ENCODE measurements at regions of chr5 and their contacts with region 1.

Region 1: DNA sequence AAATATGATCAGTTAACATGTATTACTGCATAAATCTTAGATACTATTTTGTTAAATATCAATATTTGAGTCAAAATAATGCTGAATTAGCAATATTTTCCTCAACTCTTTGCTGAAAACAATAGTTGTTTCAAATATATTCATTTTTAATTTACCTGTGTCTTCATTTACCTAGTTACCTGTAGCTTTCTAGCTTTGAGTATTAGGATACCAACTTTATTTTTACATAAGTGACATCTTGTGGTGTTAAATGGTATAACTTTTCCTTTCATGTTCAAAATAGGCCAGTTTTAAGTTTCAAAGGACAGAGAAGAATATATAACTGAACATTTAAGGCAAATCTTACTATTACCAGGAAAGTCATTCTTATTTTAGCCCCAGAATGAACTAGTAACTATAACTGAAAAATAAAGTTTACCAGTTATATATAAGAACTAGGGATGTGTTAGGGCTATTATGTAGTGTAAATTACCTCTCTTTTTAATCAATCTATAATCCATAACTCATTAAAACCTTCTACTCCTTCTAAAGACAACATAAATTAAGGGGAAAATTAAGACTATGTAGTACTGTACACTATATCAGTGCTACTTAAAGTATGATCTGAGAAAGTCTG is 25.3 kb downstream of the AP3B1 start:
- DNase-seq: peak in 4 of 9 donors; percentile 15 to 26 (median 19)
- ATAC-seq: peak; percentile 76
- H3K4me3 ChIP-seq: no peak overlapping the region
- H3K4me3 Mint-ChIP-seq: no peak overlapping the region
- H3K27ac ChIP-seq: no peak overlapping the region
- H3K27ac Mint-ChIP-seq: no peak overlapping the region
- H3K4me1 ChIP-seq: no peaks in the 10 kb centered on the region
- H3K4me1 Mint-ChIP-seq: peaks cover 9 to 36% (median 31%) of the 10 kb centered on the region in 7 donors
- H3K27me3 ChIP-seq: no peaks in the 10 kb centered on the region
- H3K27me3 Mint-ChIP-seq: no peaks in the 10 kb centered on the region

Region 2: DNA sequence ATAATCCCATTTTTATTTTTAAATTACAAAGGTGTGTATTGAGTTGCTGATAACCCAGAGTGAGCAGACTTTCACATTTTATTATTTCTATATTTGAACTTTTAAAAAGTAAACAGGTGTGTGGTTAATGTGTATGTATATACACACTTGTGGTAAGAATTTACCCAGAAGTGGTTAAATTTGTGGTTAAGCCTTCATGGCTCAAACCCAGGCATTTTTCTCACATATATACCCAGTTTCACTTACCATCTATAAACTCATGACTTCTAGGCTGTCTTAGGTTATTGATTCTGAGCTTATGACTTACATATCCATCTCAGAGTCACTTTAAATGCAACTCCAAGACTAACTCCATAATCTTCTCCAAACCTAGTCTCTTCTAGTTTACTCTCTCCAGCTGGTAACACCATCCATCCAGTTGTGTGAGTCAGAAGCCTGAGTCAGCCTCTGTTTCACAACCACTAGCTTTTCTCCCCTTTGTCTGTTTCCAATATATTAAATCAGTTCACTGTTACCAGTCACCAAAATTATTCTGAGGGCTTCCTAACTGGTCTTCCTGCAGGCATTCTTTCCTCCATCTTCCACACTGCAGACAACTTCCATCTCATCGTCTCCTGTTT is 1202.3 kb before region 1 on chr5:
- CTCF ChIA-PET with region 1: no interaction called
- POLR2A ChIA-PET with region 1: no interaction called
- intact Hi-C with region 1: loop called in 1 of 2 experiments (anchors 10 kb)
- DNase-seq: no peak
- ATAC-seq: peak; percentile 47
- H3K4me3 ChIP-seq: no peak overlapping the region
- H3K4me3 Mint-ChIP-seq: no peak overlapping the region
- H3K27ac ChIP-seq: no peak overlapping the region
- H3K27ac Mint-ChIP-seq: peak overlapping the region in 1 of 9 donors; percentile 7
- H3K4me1 ChIP-seq: no peaks in the 10 kb centered on the region
- H3K4me1 Mint-ChIP-seq: peaks cover 0 to 14% (median 6%) of the 10 kb centered on the region in 7 donors
- H3K27me3 ChIP-seq: no peaks in the 10 kb centered on the region
- H3K27me3 Mint-ChIP-seq: no peaks in the 10 kb centered on the region

Region 3: DNA sequence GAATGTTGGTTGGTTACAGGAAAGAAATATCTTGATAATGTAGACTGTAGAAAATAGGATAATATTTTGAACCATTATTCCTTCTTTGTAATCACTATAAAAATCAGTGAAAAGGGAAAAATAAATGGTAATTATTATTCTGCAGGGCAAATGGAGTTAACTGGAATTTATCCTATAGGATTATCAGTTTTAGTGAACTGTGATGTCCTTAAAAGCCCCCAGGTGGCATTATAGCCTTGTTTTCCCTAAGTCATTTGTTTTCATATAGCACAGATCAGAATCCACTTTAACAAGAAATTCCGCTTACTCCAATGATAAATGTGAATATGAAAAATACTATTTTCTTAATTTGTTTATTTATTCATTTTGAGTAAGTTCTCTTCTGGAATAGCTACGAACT is 750.9 kb before region 1 on chr5:
- CTCF ChIA-PET with region 1: no interaction called
- POLR2A ChIA-PET with region 1: no interaction called
- intact Hi-C with region 1: loop called in 1 of 2 experiments (anchors 1 kb)
- DNase-seq: no peak
- ATAC-seq: no peak
- H3K4me3 ChIP-seq: no peak overlapping the region
- H3K4me3 Mint-ChIP-seq: no peak overlapping the region
- H3K27ac ChIP-seq: no peak overlapping the region
- H3K27ac Mint-ChIP-seq: no peak overlapping the region
- H3K4me1 ChIP-seq: no peaks in the 10 kb centered on the region
- H3K4me1 Mint-ChIP-seq: no peaks in the 10 kb centered on the region
- H3K27me3 ChIP-seq: no peaks in the 10 kb centered on the region
- H3K27me3 Mint-ChIP-seq: peaks cover 5 to 14% (median 10%) of the 10 kb centered on the region in 5 donors

Region 4: DNA sequence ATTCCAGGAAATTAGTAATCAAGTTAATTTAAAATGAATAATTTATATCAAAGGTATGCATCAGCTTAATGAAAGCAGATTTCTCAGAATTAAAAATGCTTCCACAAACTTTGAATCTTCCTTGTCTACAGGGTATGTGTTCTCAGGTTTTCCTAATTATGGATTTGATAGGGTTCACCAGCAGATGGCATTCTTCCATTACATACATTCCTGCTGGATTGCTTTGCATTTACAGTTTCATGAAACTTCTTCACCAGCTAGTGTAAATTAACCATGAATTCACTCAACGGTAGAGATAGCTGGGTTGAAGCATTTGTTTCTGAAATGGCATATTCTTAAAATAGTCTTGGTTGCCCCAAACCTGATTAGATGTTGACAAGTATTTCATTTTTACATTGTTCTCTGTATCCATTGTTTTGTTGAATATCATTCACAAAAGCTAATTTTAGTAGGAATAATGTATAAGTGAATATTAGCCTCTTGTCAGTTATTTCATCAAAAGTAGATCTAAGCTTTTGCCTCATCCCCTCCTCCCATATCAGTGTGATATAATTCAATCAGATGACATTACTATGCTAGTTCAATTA is 708.4 kb before region 1 on chr5:
- CTCF ChIA-PET with region 1: interaction called, 4 read pairs
- POLR2A ChIA-PET with region 1: no interaction called
- intact Hi-C with region 1: loop called in 1 of 2 experiments (anchors 2 kb)
- DNase-seq: peak in 4 of 9 donors; percentile 1 to 13 (median 6)
- ATAC-seq: no peak
- H3K4me3 ChIP-seq: no peak overlapping the region
- H3K4me3 Mint-ChIP-seq: no peak overlapping the region
- H3K27ac ChIP-seq: no peak overlapping the region
- H3K27ac Mint-ChIP-seq: no peak overlapping the region
- H3K4me1 ChIP-seq: no peaks in the 10 kb centered on the region
- H3K4me1 Mint-ChIP-seq: no peaks in the 10 kb centered on the region
- H3K27me3 ChIP-seq: no peaks in the 10 kb centered on the region
- H3K27me3 Mint-ChIP-seq: peaks cover 0 to 17% (median 4%) of the 10 kb centered on the region in 5 donors

Region 5: DNA sequence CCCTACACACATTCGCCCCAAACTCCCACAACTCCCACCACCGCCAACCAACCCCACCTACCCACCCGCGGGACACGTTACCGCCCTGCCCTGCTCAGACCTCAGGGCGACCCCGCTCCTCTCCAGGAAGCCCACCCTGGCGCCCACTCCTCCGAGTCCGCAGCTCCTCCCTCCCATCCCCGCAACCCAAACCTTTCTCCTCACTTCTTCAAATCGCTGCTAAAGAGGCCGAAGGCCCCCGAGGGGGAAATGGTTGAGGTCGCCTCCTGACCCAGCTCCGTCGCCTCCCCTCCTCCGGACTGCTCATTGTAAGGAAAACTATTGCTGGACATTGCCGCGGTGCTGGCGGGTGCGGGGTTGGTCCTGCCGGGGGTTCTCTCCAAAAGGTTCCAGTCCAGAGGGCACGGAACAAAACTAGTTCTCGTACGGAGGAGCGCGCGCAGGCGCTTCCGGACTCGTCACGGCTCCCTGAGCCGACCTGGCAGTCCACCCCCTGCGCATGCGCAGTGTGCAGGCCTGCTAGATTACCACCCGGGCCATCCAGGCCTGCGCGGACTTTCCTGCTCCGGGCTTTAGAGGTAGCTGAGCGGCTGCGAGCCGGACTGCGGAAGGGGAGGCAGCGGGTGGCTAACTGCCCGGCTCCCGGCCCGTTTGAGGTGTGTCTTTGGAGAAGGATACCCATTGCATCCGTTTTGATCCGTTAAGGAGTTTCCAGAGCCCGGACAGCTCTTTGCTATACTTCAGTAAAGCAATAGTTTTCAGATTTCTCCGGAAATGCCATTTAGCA is 25.2 kb after region 1 on chr5 and contains the start of gene AP3B1:
- CTCF ChIA-PET with region 1: interaction called, 3 read pairs
- POLR2A ChIA-PET with region 1: interaction called, 4 read pairs
- intact Hi-C with region 1: loop called in 1 of 2 experiments (anchors 2 kb)
- DNase-seq: peak; percentile 94 to 98 (median 96)
- ATAC-seq: peak; percentile 97
- H3K4me3 ChIP-seq: peak within 1 kb of the TSS; percentile 98
- H3K4me3 Mint-ChIP-seq: peak within 1 kb of the TSS; percentile 86 to 100 (median 98)
- H3K27ac ChIP-seq: peak within 1 kb of the TSS; percentile 88
- H3K27ac Mint-ChIP-seq: peak within 1 kb of the TSS; percentile 77 to 99 (median 97)
- H3K4me1 ChIP-seq: peaks cover 5 to 9% of the 10 kb centered on the region in 2 donors
- H3K4me1 Mint-ChIP-seq: peaks cover 27 to 50% (median 46%) of the 10 kb centered on the region in 7 donors
- H3K27me3 ChIP-seq: no peaks in the 10 kb centered on the region
- H3K27me3 Mint-ChIP-seq: peaks cover 0 to 11% (median 0%) of the 10 kb centered on the region in 5 donors
- total RNA-seq, gene AP3B1: 30.2 to 45.0 (median 37.2) TPM

Measured in naive thymus-derived CD4-positive, alpha-beta T cell (primary cell).